ENCODE measurements at regions of chr20 and their contacts with region 1.

Region 1: GRCh38 chr20:37378785-37379598 is 33.1 kb downstream of the SRC start:
- DNase-seq: no peak
- ATAC-seq: peak; percentile 9; the same call in 2 of the 3 replicates
- H3K4me3 ChIP-seq: no peak overlapping the region
- H3K27ac ChIP-seq: peak overlapping the region; percentile 48
- H3K4me1 ChIP-seq: peaks cover 57% of the 10 kb centered on the region
- H3K27me3 ChIP-seq: no peaks in the 10 kb centered on the region
- CTCF ChIP-seq: no peak
- EP300 ChIP-seq: peak in 1 of 2 experiments; percentile 60; a peak in 2 of 4 replicates
- POLR2A ChIP-seq: no peak
- RAD21 ChIP-seq: no peak

Region 2: GRCh38 chr20:37336369-37337207 is 42.4 kb before region 1 on chr20:
- CTCF ChIA-PET with region 1: no interaction called
- POLR2A ChIA-PET with region 1: interaction called, 4 read pairs
- in situ Hi-C with region 1: no loop called
- intact Hi-C with region 1: loop called (anchors 2 kb)
- DNase-seq: no peak
- ATAC-seq: peak; percentile 23
- H3K4me3 ChIP-seq: peak overlapping the region; percentile 42 to 70 (median 53)
- H3K27ac ChIP-seq: peak overlapping the region; percentile 49
- H3K4me1 ChIP-seq: peaks cover 98% of the 10 kb centered on the region
- H3K27me3 ChIP-seq: no peaks in the 10 kb centered on the region
- CTCF ChIP-seq: peak; percentile 2; the same call in 1 of the 2 replicates
- EP300 ChIP-seq: no peak
- POLR2A ChIP-seq: no peak; a peak in 1 of 4 replicates
- RAD21 ChIP-seq: no peak

Region 3: DNA sequence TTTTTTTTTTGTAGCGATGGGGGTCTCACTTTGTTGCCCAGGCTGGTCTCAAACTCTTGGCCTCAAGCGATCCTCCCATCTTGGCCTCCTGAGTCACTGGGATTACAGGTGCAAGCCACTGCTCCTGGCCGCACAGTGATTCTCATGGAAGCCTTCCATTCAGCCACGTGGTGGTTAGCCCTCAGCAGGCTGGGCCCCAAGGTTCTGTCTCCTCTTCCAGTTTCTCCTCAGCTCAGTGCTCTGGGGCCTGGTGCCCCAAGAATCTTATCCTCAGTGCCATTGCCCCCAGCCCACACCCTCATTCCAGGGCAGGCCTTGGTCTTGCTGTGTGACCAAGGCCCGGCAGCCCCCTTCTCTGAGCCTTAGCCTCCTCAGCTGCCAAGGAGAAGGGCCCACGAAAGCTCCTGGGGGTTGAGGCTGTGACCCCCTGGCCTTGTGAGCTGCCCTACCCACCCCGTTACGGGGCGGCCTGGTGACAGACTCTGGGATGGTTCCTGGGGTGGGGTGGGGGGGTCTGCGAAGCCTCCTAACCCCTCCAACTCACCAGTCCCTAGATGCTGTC is 16.7 kb before region 1 on chr20:
- CTCF ChIA-PET with region 1: no interaction called
- POLR2A ChIA-PET with region 1: no interaction called
- in situ Hi-C with region 1: no loop called
- intact Hi-C with region 1: loop called (anchors 2 kb)
- DNase-seq: no peak
- ATAC-seq: no peak
- H3K4me3 ChIP-seq: no peak overlapping the region
- H3K27ac ChIP-seq: no peak overlapping the region
- H3K4me1 ChIP-seq: no peaks in the 10 kb centered on the region
- H3K27me3 ChIP-seq: no peaks in the 10 kb centered on the region
- CTCF ChIP-seq: no peak
- EP300 ChIP-seq: no peak
- POLR2A ChIP-seq: no peak
- RAD21 ChIP-seq: no peak

Region 4: DNA sequence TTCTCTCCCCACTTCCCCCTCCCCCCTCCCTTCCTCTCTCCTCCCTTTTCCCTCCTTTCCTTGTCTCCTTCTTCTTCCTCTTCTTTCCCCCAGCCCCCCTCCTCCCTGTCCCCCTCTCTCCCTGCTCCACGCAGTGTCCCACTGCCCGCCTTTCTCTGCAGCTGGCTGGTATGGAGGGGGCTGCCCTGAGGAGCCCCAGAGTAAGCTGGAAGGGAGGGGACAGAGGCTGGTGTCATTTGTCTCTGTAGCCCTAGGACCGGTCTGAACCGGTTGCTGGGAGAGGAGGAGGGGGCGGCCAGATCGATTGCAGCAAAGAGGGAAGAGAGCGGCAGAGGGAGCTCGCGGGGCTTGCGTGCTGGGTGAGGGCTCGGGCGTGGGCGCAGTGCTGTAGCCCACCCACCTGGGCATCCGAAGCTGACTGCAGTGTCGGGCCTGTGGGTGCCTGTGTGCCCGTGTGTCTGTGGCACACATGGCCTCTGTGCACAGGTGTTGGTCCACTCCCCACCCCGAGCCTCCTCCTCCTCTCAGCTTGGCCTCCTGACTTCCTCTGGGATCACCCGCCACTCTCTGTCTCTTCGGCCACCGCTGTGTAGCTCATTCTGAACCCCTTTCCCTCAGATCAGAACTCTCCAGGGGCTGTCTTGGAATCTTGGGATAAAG is 17.6 kb after region 1 on chr20:
- CTCF ChIA-PET with region 1: no interaction called
- POLR2A ChIA-PET with region 1: interaction called, 14 read pairs
- in situ Hi-C with region 1: no loop called
- intact Hi-C with region 1: no loop called
- DNase-seq: no peak
- ATAC-seq: no peak
- H3K4me3 ChIP-seq: no peak overlapping the region
- H3K27ac ChIP-seq: peak overlapping the region; percentile 21
- H3K4me1 ChIP-seq: peaks cover 78% of the 10 kb centered on the region
- H3K27me3 ChIP-seq: no peaks in the 10 kb centered on the region
- CTCF ChIP-seq: no peak
- EP300 ChIP-seq: no peak
- POLR2A ChIP-seq: no peak
- RAD21 ChIP-seq: no peak